ENCODE measurements at regions of chr3 and their contacts with region 1.

Region 1: GRCh38 chr3:197599089-197599765 is 43.5 kb upstream of the BDH1 start:
- DNase-seq: peak; percentile 84
- ATAC-seq: peak; percentile 91
- H3K4me3 ChIP-seq: no peak overlapping the region
- H3K4me3 Mint-ChIP-seq: no peak overlapping the region
- H3K27ac ChIP-seq: no peak overlapping the region
- H3K27ac Mint-ChIP-seq: peak overlapping the region; percentile 46
- H3K4me1 ChIP-seq: peaks cover 0 to 8% of the 10 kb centered on the region in 2 donors
- H3K4me1 Mint-ChIP-seq: peaks cover 8% of the 10 kb centered on the region
- H3K27me3 ChIP-seq: no peaks in the 10 kb centered on the region
- H3K27me3 Mint-ChIP-seq: no peaks in the 10 kb centered on the region
- CTCF ChIP-seq: peak; percentile 93

Region 2: GRCh38 chr3:197367081-197367780 is 232.0 kb before region 1 on chr3:
- CTCF ChIA-PET with region 1: no interaction called
- POLR2A ChIA-PET with region 1: no interaction called
- intact Hi-C with region 1: no loop called
- DNase-seq: no peak
- ATAC-seq: no peak
- H3K4me3 ChIP-seq: no peak overlapping the region
- H3K4me3 Mint-ChIP-seq: no peak overlapping the region
- H3K27ac ChIP-seq: no peak overlapping the region
- H3K27ac Mint-ChIP-seq: no peak overlapping the region
- H3K4me1 ChIP-seq: no peaks in the 10 kb centered on the region
- H3K4me1 Mint-ChIP-seq: no peaks in the 10 kb centered on the region
- H3K27me3 ChIP-seq: peaks cover 0 to 4% (median 1%) of the 10 kb centered on the region in 4 experiments
- H3K27me3 Mint-ChIP-seq: peaks cover 24% of the 10 kb centered on the region
- CTCF ChIP-seq: no peak

Region 3: GRCh38 chr3:197554562-197555280 is 44.5 kb before region 1 on chr3:
- CTCF ChIA-PET with region 1: interaction called, 4 read pairs
- POLR2A ChIA-PET with region 1: no interaction called
- intact Hi-C with region 1: loop called (anchors 1 kb)
- DNase-seq: peak; percentile 95
- ATAC-seq: peak; percentile 93
- H3K4me3 ChIP-seq: peak overlapping the region; percentile 55 to 93 (median 76)
- H3K4me3 Mint-ChIP-seq: peak overlapping the region; percentile 94
- H3K27ac ChIP-seq: peak overlapping the region; percentile 80 to 92
- H3K27ac Mint-ChIP-seq: peak overlapping the region; percentile 90
- H3K4me1 ChIP-seq: peaks cover 6 to 13% of the 10 kb centered on the region in 2 donors
- H3K4me1 Mint-ChIP-seq: peaks cover 9% of the 10 kb centered on the region
- H3K27me3 ChIP-seq: peaks cover 0 to 2% (median 0%) of the 10 kb centered on the region in 4 experiments
- H3K27me3 Mint-ChIP-seq: peaks cover 7% of the 10 kb centered on the region
- CTCF ChIP-seq: peak; percentile 61

Region 4: GRCh38 chr3:197674741-197675562 is 75.7 kb after region 1 on chr3:
- CTCF ChIA-PET with region 1: interaction called, 49 read pairs
- POLR2A ChIA-PET with region 1: interaction called, 4 read pairs
- intact Hi-C with region 1: loop called (anchors 1 kb)
- DNase-seq: peak; percentile 80
- ATAC-seq: peak; percentile 91
- H3K4me3 ChIP-seq: no peak overlapping the region
- H3K4me3 Mint-ChIP-seq: peak overlapping the region; percentile 89
- H3K27ac ChIP-seq: peak overlapping the region; percentile 73
- H3K27ac Mint-ChIP-seq: peak overlapping the region; percentile 96
- H3K4me1 ChIP-seq: peaks cover 3 to 21% of the 10 kb centered on the region in 2 donors
- H3K4me1 Mint-ChIP-seq: peaks cover 47% of the 10 kb centered on the region
- H3K27me3 ChIP-seq: no peaks in the 10 kb centered on the region
- H3K27me3 Mint-ChIP-seq: no peaks in the 10 kb centered on the region
- CTCF ChIP-seq: no peak

Region 5: DNA sequence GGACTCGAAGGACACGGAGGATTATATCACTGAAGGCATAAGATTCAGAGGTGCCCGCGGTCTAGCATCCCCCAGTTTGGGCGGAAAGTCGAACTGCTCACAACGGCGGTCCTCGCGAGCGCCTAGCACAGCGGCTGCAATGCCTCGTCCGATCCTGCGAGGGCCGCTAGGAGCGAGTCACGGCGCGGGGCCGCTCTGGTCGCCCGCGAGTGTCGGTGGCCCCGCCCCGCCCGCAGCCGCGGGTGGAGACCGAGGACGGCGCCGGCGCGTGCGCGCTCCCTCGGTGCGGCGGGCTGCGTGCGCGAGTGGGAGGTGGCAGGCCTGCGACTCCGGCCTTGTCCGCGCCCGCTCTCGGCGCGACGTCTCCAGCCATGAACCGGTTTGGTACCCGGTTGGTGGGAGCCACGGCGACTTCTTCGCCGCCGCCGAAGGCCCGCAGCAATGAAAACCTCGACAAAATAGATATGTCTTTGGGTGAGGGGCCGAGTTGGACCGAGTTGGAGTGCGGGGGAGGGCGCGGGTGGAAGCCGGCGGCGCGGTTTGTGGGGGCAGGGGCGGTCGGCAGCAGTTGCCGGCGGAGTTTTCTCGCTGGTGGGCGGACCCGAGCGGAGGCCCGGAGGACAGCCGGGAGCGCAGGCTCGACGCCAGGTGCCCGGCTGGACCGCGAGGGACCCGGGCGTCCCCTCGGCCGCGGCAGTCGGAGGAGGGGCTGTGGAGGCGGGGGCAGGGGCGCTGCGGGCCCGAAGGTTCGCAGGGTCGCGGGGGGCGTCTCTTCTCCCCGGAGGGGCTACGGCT is 150.6 kb after region 1 on chr3 and contains the start of gene FYTTD1:
- CTCF ChIA-PET with region 1: interaction called, 6 read pairs
- POLR2A ChIA-PET with region 1: no interaction called
- intact Hi-C with region 1: loop called (anchors 1 kb)
- DNase-seq: peak; percentile 95
- ATAC-seq: peak; percentile 90
- H3K4me3 ChIP-seq: peak within 1 kb of the TSS; percentile 76 to 97 (median 83)
- H3K4me3 Mint-ChIP-seq: peak within 1 kb of the TSS; percentile 96
- H3K27ac ChIP-seq: peak within 1 kb of the TSS; percentile 88 to 94
- H3K27ac Mint-ChIP-seq: peak within 1 kb of the TSS; percentile 97
- H3K4me1 ChIP-seq: peaks cover 18 to 26% of the 10 kb centered on the region in 2 donors
- H3K4me1 Mint-ChIP-seq: peaks cover 43% of the 10 kb centered on the region
- H3K27me3 ChIP-seq: no peaks in the 10 kb centered on the region
- H3K27me3 Mint-ChIP-seq: no peaks in the 10 kb centered on the region
- CTCF ChIP-seq: peak; percentile 64
- total RNA-seq, gene FYTTD1: 110 and 121 TPM in 2 replicates

Region 6: GRCh38 chr3:197801891-197802778 is 202.9 kb after region 1 on chr3:
- CTCF ChIA-PET with region 1: interaction called, 14 read pairs
- POLR2A ChIA-PET with region 1: no interaction called
- intact Hi-C with region 1: loop called (anchors 1 kb)
- DNase-seq: peak; percentile 66
- ATAC-seq: peak; percentile 54
- H3K4me3 ChIP-seq: no peak overlapping the region
- H3K4me3 Mint-ChIP-seq: no peak overlapping the region
- H3K27ac ChIP-seq: peak overlapping the region in 1 of 2 donors; percentile 27
- H3K27ac Mint-ChIP-seq: peak overlapping the region; percentile 12
- H3K4me1 ChIP-seq: peaks cover 15 to 28% of the 10 kb centered on the region in 2 donors
- H3K4me1 Mint-ChIP-seq: peaks cover 51% of the 10 kb centered on the region
- H3K27me3 ChIP-seq: no peaks in the 10 kb centered on the region
- H3K27me3 Mint-ChIP-seq: no peaks in the 10 kb centered on the region
- CTCF ChIP-seq: peak; percentile 80

Region 7: GRCh38 chr3:197847866-197848401 is 248.7 kb after region 1 on chr3:
- CTCF ChIA-PET with region 1: interaction called, 7 read pairs
- POLR2A ChIA-PET with region 1: interaction called, 3 read pairs
- intact Hi-C with region 1: loop called (anchors 1 kb)
- DNase-seq: peak; percentile 73
- ATAC-seq: peak; percentile 95
- H3K4me3 ChIP-seq: peak overlapping the region in 4 of 5 experiments; percentile 10 to 42 (median 30)
- H3K4me3 Mint-ChIP-seq: peak overlapping the region; percentile 79
- H3K27ac ChIP-seq: peak overlapping the region; percentile 71 to 85
- H3K27ac Mint-ChIP-seq: peak overlapping the region; percentile 91
- H3K4me1 ChIP-seq: peaks cover 9 to 11% of the 10 kb centered on the region in 2 donors
- H3K4me1 Mint-ChIP-seq: peaks cover 18% of the 10 kb centered on the region
- H3K27me3 ChIP-seq: no peaks in the 10 kb centered on the region
- H3K27me3 Mint-ChIP-seq: no peaks in the 10 kb centered on the region
- CTCF ChIP-seq: no peak

Region 8: GRCh38 chr3:197942956-197943556 is 343.8 kb after region 1 on chr3:
- CTCF ChIA-PET with region 1: interaction called, 11 read pairs
- POLR2A ChIA-PET with region 1: no interaction called
- intact Hi-C with region 1: no loop called
- DNase-seq: peak; percentile 60
- ATAC-seq: peak; percentile 66
- H3K4me3 ChIP-seq: no peak overlapping the region
- H3K4me3 Mint-ChIP-seq: no peak overlapping the region
- H3K27ac ChIP-seq: no peak overlapping the region
- H3K27ac Mint-ChIP-seq: no peak overlapping the region
- H3K4me1 ChIP-seq: no peaks in the 10 kb centered on the region
- H3K4me1 Mint-ChIP-seq: no peaks in the 10 kb centered on the region
- H3K27me3 ChIP-seq: no peaks in the 10 kb centered on the region
- H3K27me3 Mint-ChIP-seq: no peaks in the 10 kb centered on the region
- CTCF ChIP-seq: peak; percentile 82